ENCODE measurements at regions of chr9 and their contacts with region 1.

Region 1: GRCh38 chr9:2125906-2126305 is 110.8 kb downstream of the SMARCA2 start:
- DNase-seq: no peak
- H3K4me3 ChIP-seq: peak overlapping the region; percentile 27 to 28
- H3K27ac ChIP-seq: peak overlapping the region; percentile 85 to 87
- H3K4me1 ChIP-seq: peaks cover 0 to 97% (median 72%) of the 10 kb centered on the region in 4 donors
- H3K27me3 ChIP-seq: no peaks in the 10 kb centered on the region
- CTCF ChIP-seq: no peak

Region 2: DNA sequence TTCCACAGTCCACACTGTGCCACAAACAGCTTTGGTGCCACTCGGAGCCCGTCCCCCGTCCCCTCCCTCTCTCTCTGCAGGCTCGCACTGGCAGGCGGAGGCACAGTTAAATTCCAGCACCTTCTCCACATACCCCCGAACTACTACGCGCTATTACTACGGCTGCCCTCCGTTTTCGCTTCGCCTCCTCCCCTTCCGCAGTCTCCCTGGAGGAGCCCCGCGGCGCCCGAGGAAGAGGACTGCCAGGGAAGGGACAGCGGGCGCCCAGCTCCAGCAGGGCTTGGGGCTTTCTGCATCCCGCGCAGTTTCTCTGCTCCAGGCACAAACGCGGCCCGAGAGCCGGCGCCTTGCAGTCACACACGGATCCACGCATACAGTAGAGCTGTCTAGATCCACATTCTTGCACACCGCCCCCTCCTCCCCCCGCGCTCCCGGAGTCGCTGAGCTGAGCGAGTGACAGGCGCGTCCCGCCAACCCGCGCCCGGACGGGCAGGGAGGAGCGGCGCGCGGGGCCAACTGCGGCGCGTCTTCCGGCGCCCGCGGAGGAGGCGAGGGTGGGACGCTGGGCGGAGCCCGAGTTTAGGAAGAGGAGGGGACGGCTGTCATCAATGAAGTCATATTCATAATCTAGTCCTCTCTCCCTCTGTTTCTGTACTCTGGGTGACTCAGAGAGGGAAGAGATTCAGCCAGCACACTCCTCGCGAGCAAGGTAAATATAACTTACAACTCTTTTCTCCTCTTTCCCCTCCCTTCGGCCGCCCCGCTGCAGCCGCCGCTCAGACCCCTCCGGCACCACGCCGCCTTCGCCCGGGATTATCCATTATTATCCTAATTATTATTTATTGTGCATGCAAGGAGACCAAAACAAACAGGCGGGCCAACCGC is 111.0 kb before region 1 on chr9 and contains the start of gene SMARCA2:
- intact Hi-C with region 1: loop called (anchors 10 kb)
- DNase-seq: peak; percentile 98 to 99
- H3K4me3 ChIP-seq: peak within 1 kb of the TSS; percentile 67 to 76
- H3K27ac ChIP-seq: peak within 1 kb of the TSS; percentile 96 to 97
- H3K4me1 ChIP-seq: peaks cover 0 to 31% (median 22%) of the 10 kb centered on the region in 4 donors
- H3K27me3 ChIP-seq: no peaks in the 10 kb centered on the region
- CTCF ChIP-seq: no peak

Region 3: GRCh38 chr9:2367973-2368372 is 242.1 kb after region 1 on chr9:
- intact Hi-C with region 1: no loop called
- DNase-seq: no peak
- H3K4me3 ChIP-seq: no peak overlapping the region
- H3K27ac ChIP-seq: no peak overlapping the region
- H3K4me1 ChIP-seq: no peaks in the 10 kb centered on the region
- H3K27me3 ChIP-seq: no peaks in the 10 kb centered on the region
- CTCF ChIP-seq: no peak

Measured in tibial artery (tissue), 4 donors.